Activated T-helper 2 cell treated with anti-CD3 and anti-CD28 coated beads, Interferon-gamma antibody, Interleukin-2, Interleukin-4, amounts not matched to agents 10 μg/mL and 5 μg/mL and 100 μg/mL, durations not matched to agents 14 hours and 24 hours and 36 hours (primary cell): ENCODE measurements at regions of chr10 and their contacts with region 1.

Region 1: GRCh38 chr10:93482145-93482834 is at the start of gene MYOF:
- DNase-seq: peak; percentile 37
- H3K4me3 Mint-ChIP-seq: peak within 1 kb of the TSS; percentile 91
- H3K27ac Mint-ChIP-seq: peak within 1 kb of the TSS; percentile 93
- H3K4me1 Mint-ChIP-seq: peaks cover 27% of the 10 kb centered on the region
- H3K27me3 Mint-ChIP-seq: no peaks in the 10 kb centered on the region
- total RNA-seq, gene MYOF: 32.5 and 33.2 TPM in 2 replicates

Region 2: DNA sequence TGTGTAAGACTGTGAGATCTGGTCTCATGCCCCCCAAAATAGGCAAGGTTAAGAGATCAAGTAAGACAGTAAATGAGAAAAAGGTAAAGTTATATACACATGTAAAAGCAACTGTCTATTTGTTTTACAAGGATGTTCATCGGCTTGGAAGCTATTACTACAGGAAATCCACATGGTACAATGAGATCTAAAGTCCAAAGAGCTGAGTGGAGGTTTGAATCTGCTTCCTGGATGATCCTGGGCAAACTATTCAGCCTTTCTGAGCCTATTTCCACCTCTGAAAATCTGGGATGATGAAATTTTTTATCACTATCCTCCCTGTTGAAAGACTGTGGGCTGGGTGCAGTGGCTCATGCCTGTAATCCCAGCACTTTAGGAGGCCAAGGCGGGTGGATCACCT is 1031.4 kb before region 1 on chr10:
- intact Hi-C with region 1: no loop called
- DNase-seq: no peak
- H3K4me3 Mint-ChIP-seq: no peak overlapping the region
- H3K27ac Mint-ChIP-seq: no peak overlapping the region
- H3K4me1 Mint-ChIP-seq: peaks cover 3% of the 10 kb centered on the region
- H3K27me3 Mint-ChIP-seq: no peaks in the 10 kb centered on the region

Region 3: DNA sequence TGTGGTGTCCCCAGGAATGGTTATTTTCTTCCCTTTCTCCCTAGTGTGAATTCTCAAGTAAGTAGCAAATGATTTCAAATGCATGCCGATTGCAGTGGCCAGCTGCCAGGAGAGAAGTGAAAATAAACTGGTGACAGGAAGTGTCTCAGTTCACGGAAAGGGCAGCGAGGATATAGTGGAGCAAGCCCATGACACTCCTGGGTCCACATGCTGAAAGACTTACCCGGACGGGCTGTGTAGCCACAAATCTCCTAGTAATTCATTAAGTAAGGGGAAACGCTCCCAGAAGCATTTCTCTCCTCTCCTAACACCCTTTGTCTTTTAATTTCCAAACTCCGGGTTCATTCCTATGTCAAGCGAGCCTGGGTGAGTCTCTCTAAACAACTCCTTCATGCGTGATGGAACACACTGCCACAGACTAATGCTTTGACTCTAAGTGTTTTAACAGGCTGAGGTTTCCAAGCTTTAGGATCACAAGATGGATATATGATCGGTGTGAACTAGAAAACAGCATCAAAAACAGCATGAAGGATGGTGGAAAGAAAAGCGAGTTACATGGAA is 283.0 kb before region 1 on chr10:
- intact Hi-C with region 1: no loop called
- DNase-seq: no peak
- H3K4me3 Mint-ChIP-seq: no peak overlapping the region
- H3K27ac Mint-ChIP-seq: no peak overlapping the region
- H3K4me1 Mint-ChIP-seq: peaks cover 3% of the 10 kb centered on the region
- H3K27me3 Mint-ChIP-seq: peaks cover 33% of the 10 kb centered on the region

Region 4: DNA sequence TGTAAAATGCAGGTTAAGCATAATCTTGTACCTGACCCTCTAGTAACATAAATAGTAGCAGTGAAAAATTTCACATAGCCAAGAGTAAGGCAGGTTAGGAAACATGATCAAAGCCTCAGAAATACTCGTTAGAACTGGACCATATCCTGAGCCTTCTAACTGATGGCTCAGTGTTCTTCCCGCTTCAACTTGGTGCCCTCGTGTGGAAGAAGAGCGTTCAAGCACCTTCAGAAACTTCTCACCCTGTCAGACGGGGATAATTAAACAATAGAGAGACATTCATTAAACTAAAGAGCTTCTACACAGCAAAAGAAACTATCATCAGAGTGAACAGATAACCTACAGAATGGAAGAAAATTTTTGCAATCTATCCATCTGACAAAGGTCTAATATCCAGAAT is 124.6 kb before region 1 on chr10:
- intact Hi-C with region 1: loop called (anchors 5 kb)
- DNase-seq: no peak
- H3K4me3 Mint-ChIP-seq: no peak overlapping the region
- H3K27ac Mint-ChIP-seq: peak overlapping the region; percentile 24
- H3K4me1 Mint-ChIP-seq: peaks cover 9% of the 10 kb centered on the region
- H3K27me3 Mint-ChIP-seq: no peaks in the 10 kb centered on the region

Region 5: DNA sequence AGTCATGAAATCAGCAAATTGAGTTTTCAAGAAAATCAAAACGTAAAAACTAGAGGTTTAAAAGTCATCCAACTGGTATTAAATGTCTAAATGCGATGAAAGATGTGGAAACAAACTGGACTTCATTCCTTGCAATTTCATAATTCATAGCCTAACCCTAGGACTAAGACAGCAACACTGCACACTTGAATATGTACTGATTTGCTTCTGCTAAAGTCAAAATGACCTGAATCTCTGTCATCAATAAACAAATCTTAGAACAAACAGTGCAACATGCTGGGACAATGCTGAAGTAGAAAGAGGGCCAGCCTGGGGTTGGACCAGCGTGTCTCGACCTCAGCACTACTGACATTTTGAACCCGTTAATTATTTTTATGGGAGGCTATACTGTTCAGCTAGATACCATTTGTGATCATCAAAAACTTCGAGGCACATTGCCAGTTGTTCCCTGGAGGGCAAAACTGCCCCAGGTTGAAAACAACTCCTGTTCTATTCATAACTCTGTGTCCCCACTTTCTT is 47.2 kb before region 1 on chr10:
- intact Hi-C with region 1: no loop called
- DNase-seq: no peak
- H3K4me3 Mint-ChIP-seq: no peak overlapping the region
- H3K27ac Mint-ChIP-seq: no peak overlapping the region
- H3K4me1 Mint-ChIP-seq: peaks cover 3% of the 10 kb centered on the region
- H3K27me3 Mint-ChIP-seq: no peaks in the 10 kb centered on the region

Region 6: DNA sequence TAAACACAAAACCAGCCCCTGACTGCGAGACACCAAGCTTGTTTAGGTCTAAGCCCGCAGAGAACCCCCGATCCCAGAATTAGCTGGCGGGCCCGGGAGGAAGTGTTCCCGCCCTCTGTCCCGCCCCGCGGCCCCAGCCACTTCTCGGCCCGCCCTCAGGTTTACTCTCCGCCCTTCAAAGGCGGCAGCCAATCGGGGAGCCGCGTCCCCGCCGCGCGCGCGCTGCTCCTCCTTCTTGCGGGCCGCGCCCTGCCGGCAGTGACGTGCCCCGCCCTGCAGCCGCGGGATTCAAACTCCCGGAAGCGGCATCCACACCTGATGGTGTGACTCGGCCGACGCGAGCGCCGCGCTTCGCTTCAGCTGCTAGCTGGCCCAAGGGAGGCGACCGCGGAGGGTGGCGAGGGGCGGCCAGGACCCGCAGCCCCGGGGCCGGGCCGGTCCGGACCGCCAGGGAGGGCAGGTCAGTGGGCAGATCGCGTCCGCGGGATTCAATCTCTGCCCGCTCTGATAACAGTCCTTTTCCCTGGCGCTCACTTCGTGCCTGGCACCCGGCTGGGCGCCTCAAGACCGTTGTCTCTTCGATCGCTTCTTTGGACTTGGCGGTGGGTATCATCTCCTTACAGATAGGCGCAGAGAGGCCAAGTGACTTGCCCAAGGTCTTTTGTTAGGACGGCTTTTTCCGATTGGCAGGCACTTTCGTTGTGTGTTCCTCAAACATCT is 14.2 kb after region 1 on chr10 and contains the start of gene CEP55:
- intact Hi-C with region 1: loop called (anchors 2 kb)
- DNase-seq: peak; percentile 95
- H3K4me3 Mint-ChIP-seq: peak within 1 kb of the TSS; percentile 97
- H3K27ac Mint-ChIP-seq: peak within 1 kb of the TSS; percentile 96
- H3K4me1 Mint-ChIP-seq: peaks cover 54% of the 10 kb centered on the region
- H3K27me3 Mint-ChIP-seq: no peaks in the 10 kb centered on the region
- total RNA-seq, gene CEP55: 72.6 and 76.1 TPM in 2 replicates

Region 7: GRCh38 chr10:93503075-93503474 is 20.8 kb after region 1 on chr10:
- intact Hi-C with region 1: loop called (anchors 1 kb)
- DNase-seq: no peak
- H3K4me3 Mint-ChIP-seq: peak overlapping the region; percentile 66
- H3K27ac Mint-ChIP-seq: peak overlapping the region; percentile 87
- H3K4me1 Mint-ChIP-seq: peaks cover 74% of the 10 kb centered on the region
- H3K27me3 Mint-ChIP-seq: no peaks in the 10 kb centered on the region

Region 8: DNA sequence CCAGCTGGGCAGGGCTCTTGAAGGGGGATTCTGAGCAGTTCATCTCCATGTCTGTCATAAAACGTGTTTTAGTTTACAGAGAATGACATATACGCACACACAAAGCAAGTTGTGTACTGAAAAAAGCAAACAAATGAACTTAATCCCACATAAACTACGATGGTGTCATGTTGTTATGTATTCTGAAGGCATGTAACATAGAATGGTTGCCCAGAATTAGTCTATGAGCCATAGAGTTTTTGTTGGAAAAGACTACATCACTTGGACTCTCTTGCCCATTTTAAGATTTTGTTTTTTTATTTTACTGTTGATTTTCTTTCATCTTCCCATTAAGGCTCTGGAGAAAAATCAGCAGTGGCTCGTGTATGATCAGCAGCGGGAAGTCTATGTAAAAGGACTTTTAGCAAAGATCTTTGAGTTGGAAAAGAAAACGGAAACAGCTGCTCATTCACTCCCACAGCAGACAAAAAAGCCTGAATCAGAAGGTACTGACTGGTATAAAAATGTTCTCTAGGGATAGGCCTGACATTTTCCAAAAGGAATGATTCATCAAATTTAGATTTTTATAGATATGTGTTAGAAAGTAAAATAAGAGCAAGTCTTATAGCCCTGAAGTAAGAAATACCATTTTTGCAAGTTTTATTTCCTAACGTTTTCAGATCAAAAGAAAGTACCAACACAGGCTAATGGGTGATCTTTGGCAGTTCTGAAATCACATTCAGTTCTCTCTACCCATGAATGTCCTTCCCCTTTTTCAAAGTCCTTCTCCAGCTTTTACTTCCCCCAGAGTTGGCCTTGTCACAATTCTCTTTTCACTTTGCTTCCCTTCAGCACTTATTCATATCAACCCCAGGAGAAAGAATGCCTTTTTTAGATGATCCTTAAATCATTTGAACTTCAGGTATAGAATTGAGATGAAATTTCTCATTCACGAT is 33.0 kb after region 1 on chr10:
- intact Hi-C with region 1: loop called (anchors 1 kb)
- DNase-seq: no peak
- H3K4me3 Mint-ChIP-seq: no peak overlapping the region
- H3K27ac Mint-ChIP-seq: no peak overlapping the region
- H3K4me1 Mint-ChIP-seq: peaks cover 8% of the 10 kb centered on the region
- H3K27me3 Mint-ChIP-seq: no peaks in the 10 kb centered on the region

Region 9: GRCh38 chr10:93535293-93535692 is 53.0 kb after region 1 on chr10:
- intact Hi-C with region 1: no loop called
- DNase-seq: no peak
- H3K4me3 Mint-ChIP-seq: no peak overlapping the region
- H3K27ac Mint-ChIP-seq: no peak overlapping the region
- H3K4me1 Mint-ChIP-seq: no peaks in the 10 kb centered on the region
- H3K27me3 Mint-ChIP-seq: peaks cover 21% of the 10 kb centered on the region